SK-N-SH (cell line): ENCODE measurements at regions of chr16 and their contacts with region 1.

Region 1: GRCh38 chr16:85615852-85616606 is 2.9 kb downstream of the GSE1 start:
- DNase-seq: peak; percentile 86
- H3K4me3 ChIP-seq: peak overlapping the region; percentile 42 to 86; a peak in 2 of 4 replicates
- H3K27ac ChIP-seq: peak overlapping the region in 1 of 2 experiments; percentile 97; a peak in 2 of 4 replicates
- H3K4me1 ChIP-seq: peaks cover 9 to 64% of the 10 kb centered on the region in 2 experiments
- H3K27me3 ChIP-seq: no peaks in the 10 kb centered on the region
- CTCF ChIP-seq: peak; percentile 91
- EP300 ChIP-seq: no peak
- RAD21 ChIP-seq: peak; percentile 65

Region 2: DNA sequence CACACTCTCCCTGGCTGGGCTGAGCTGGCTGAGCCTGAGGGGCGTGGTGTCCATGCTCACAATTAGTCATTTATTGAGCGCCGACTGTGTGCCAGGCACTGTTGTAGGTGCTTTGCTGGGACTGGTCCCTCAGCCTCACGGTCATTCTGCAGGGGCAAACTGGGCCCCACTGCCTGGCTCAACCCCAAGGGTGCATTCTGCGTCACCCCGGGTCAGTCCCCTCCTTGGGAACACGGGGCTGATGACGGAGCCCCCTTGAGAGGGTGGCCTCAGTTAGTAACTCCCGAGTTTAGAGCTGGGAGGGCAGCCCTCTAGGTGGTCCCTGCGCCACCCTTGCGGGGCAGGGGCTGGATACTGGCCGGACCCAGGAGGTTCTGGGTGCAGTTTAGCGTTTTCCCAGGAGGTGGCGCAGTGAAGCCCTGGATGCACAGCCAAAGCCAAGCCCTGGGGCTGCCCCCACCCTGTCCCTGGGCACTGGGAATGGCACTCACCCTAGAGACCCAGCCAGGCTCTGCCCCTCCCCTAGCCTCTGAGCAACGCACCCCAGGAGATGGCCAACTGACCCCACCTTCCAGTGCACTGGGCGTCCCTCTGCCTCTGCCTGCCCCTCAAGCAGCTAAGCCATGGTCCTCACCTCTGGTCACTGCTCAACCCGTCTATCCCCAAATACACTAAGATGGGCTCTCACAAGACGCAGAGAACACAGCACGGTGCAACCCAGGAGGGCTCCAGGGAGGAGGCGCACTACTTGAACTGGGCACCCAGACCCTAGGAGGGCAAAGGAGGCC is 246.1 kb before region 1 on chr16:
- CTCF ChIA-PET with region 1: interaction called, 13 read pairs
- POLR2A ChIA-PET with region 1: no interaction called
- DNase-seq: peak; percentile 84
- H3K4me3 ChIP-seq: no peak overlapping the region
- H3K27ac ChIP-seq: peak overlapping the region; percentile 50 to 95; a peak in 3 of 4 replicates
- H3K4me1 ChIP-seq: peaks cover 25 to 90% of the 10 kb centered on the region in 2 experiments
- H3K27me3 ChIP-seq: no peaks in the 10 kb centered on the region
- CTCF ChIP-seq: peak; percentile 87
- EP300 ChIP-seq: no peak
- RAD21 ChIP-seq: peak; percentile 71

Region 3: GRCh38 chr16:85554112-85554813 is 61.8 kb before region 1 on chr16:
- CTCF ChIA-PET with region 1: interaction called, 51 read pairs
- POLR2A ChIA-PET with region 1: interaction called, 4 read pairs
- DNase-seq: peak; percentile 82
- H3K4me3 ChIP-seq: peak overlapping the region; percentile 75 to 84
- H3K27ac ChIP-seq: peak overlapping the region; percentile 73 to 99
- H3K4me1 ChIP-seq: peaks cover 10 to 51% of the 10 kb centered on the region in 2 experiments; a peak in 3 of 4 replicates
- H3K27me3 ChIP-seq: no peaks in the 10 kb centered on the region
- CTCF ChIP-seq: no peak
- EP300 ChIP-seq: peak in 1 of 2 experiments; percentile 87; a peak in 1 of 4 replicates
- RAD21 ChIP-seq: peak; percentile 15; the same call in 1 of the 2 replicates

Region 4: GRCh38 chr16:85639536-85640253 is 23.7 kb after region 1 on chr16:
- CTCF ChIA-PET with region 1: interaction called, 25 read pairs
- POLR2A ChIA-PET with region 1: no interaction called
- DNase-seq: peak; percentile 92
- H3K4me3 ChIP-seq: no peak overlapping the region
- H3K27ac ChIP-seq: peak overlapping the region in 1 of 2 experiments; percentile 54; a peak in 2 of 4 replicates
- H3K4me1 ChIP-seq: peaks cover 0 to 74% of the 10 kb centered on the region in 2 experiments; a peak in 1 of 4 replicates
- H3K27me3 ChIP-seq: no peaks in the 10 kb centered on the region
- CTCF ChIP-seq: no peak
- EP300 ChIP-seq: peak in 1 of 2 experiments; percentile 53; a peak in 1 of 4 replicates
- RAD21 ChIP-seq: peak; percentile 31

Region 5: DNA sequence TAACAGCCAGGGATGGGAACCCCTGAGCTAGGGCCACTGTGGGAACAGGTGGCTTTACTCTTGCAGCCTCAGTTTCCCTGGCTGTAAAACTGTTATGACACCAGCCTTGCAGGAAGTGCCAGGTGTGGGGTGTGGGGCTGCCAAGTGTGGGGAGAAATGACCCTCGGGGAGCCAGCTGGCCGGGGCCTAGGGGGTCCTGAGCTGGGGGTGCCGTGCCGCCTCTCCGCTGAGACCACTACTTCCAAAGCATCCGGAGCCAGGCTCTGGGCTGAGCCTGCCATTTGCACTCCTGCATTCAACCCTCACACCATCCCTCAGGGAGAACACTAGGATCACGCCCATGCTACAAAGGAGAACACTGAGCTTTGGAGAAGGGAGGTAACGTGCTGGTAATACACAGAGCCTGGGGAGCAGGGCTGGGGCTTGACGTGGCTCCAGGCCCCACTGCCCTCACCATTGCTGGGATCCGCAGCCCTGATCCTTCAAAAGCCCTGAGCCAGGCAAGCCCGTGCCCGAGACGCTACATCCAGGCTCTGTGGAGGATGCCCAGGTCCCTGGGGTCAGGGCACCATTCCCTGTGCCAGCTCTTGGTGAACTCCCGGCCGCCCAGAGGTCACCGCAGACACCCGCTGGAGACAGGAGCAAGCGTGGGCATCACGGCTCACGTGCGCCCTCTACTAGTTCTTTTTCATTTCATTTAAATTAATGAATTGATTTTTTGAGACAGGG is 101.5 kb after region 1 on chr16:
- CTCF ChIA-PET with region 1: interaction called, 15 read pairs
- POLR2A ChIA-PET with region 1: no interaction called
- DNase-seq: peak; percentile 89
- H3K4me3 ChIP-seq: no peak overlapping the region
- H3K27ac ChIP-seq: no peak overlapping the region
- H3K4me1 ChIP-seq: peaks cover 0 to 17% of the 10 kb centered on the region in 2 experiments; a peak in 1 of 4 replicates
- H3K27me3 ChIP-seq: no peaks in the 10 kb centered on the region
- CTCF ChIP-seq: peak; percentile 78
- EP300 ChIP-seq: no peak
- RAD21 ChIP-seq: peak; percentile 87